Transverse colon (tissue), 4 donors: ENCODE measurements at regions of chr13 and their contacts with region 1.

Region 1: GRCh38 chr13:27270594-27271520 is at the start of gene RASL11A:
- DNase-seq: peak; percentile 90
- H3K4me3 ChIP-seq: peak within 1 kb of the TSS; percentile 64 to 82 (median 66)
- H3K27ac ChIP-seq: peak within 1 kb of the TSS; percentile 91 to 97 (median 94)
- H3K4me1 ChIP-seq: peaks cover 7 to 37% (median 14%) of the 10 kb centered on the region in 4 donors
- H3K27me3 ChIP-seq: no peaks in the 10 kb centered on the region
- CTCF ChIP-seq: peak; percentile 93 to 99 (median 96)
- EP300 ChIP-seq: no peak
- POLR2A ChIP-seq: peak; percentile 95
- total RNA-seq, gene RASL11A: 18.7 to 37.7 (median 28.9) TPM

Region 2: DNA sequence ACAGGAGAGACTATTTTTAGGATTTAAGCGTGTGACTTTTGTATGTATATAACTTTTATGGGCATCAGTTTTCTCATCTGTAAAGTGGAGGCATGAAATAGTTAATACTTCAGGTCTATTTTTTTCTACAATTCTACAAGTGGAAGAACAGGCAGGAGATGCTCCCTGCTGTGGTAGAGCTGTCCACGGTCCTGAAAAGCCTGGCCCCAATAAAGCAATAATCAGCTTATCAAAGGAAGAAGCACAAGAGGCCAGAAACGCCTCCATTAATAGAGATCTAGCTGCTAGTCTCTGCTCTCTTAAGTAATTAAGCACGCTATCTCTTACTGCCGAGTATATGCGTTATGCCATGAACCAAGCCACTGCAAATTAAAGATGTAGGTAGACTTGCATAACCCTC is 741.4 kb before region 1 on chr13:
- in situ Hi-C with region 1: no loop called
- intact Hi-C with region 1: no loop called
- DNase-seq: peak; percentile 20
- H3K4me3 ChIP-seq: no peak overlapping the region
- H3K27ac ChIP-seq: no peak overlapping the region
- H3K4me1 ChIP-seq: no peaks in the 10 kb centered on the region
- H3K27me3 ChIP-seq: peaks cover 12% of the 10 kb centered on the region
- CTCF ChIP-seq: no peak
- EP300 ChIP-seq: no peak
- POLR2A ChIP-seq: no peak

Region 3: GRCh38 chr13:26887594-26887993 is 383.3 kb before region 1 on chr13:
- in situ Hi-C with region 1: no loop called
- intact Hi-C with region 1: no loop called
- DNase-seq: no peak
- H3K4me3 ChIP-seq: no peak overlapping the region
- H3K27ac ChIP-seq: no peak overlapping the region
- H3K4me1 ChIP-seq: no peaks in the 10 kb centered on the region
- H3K27me3 ChIP-seq: no peaks in the 10 kb centered on the region
- CTCF ChIP-seq: no peak
- EP300 ChIP-seq: no peak
- POLR2A ChIP-seq: no peak

Region 4: DNA sequence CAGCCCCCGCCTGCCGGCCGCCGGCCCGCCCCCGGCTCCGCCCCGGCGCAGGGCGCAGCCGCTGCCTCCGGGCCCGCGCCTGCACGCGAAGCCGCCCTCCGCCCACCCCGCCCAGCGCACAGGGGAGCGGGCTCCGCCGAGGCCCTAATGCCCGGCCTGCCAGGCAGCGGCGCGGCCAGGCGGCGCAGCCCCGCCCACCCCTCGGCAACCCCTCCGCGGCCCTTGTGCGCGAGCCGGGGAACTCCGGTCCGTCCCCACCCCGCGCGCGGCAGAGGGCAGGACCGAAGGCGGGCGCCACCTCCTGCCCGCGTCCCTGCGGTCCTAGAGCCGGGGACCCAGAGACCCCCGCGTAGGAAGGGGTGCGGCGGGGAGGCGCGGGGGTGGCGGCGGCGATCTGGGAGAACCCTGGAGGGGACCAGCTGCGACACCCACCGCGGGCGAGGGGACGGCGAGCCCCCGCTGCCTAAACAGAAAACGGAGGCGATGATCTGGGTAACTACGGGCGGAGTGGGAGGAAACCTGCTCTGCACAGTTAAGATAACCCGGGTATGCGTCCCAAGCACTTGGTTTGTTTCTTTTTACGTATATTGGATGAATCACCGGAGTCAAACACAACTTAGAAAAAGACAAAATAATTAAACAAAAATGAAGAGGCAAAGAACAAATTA is 98.9 kb before region 1 on chr13:
- in situ Hi-C with region 1: loop called in 1 of 4 experiments (anchors 25 kb)
- intact Hi-C with region 1: no loop called
- DNase-seq: peak; percentile 96
- H3K4me3 ChIP-seq: peak overlapping the region; percentile 72 to 92 (median 80)
- H3K27ac ChIP-seq: peak overlapping the region; percentile 93 to 97 (median 96)
- H3K4me1 ChIP-seq: peaks cover 22 to 46% (median 32%) of the 10 kb centered on the region in 4 donors
- H3K27me3 ChIP-seq: no peaks in the 10 kb centered on the region
- CTCF ChIP-seq: peak in 1 of 5 experiments; percentile 10
- EP300 ChIP-seq: no peak
- POLR2A ChIP-seq: peak; percentile 26

Region 5: GRCh38 chr13:27341616-27342015 is 70.8 kb after region 1 on chr13:
- in situ Hi-C with region 1: loop called in 1 of 4 experiments (anchors 10 kb)
- intact Hi-C with region 1: loop called (anchors 5 kb)
- DNase-seq: no peak
- H3K4me3 ChIP-seq: no peak overlapping the region
- H3K27ac ChIP-seq: no peak overlapping the region
- H3K4me1 ChIP-seq: no peaks in the 10 kb centered on the region
- H3K27me3 ChIP-seq: peaks cover 5% of the 10 kb centered on the region
- CTCF ChIP-seq: no peak
- EP300 ChIP-seq: no peak
- POLR2A ChIP-seq: no peak

Region 6: DNA sequence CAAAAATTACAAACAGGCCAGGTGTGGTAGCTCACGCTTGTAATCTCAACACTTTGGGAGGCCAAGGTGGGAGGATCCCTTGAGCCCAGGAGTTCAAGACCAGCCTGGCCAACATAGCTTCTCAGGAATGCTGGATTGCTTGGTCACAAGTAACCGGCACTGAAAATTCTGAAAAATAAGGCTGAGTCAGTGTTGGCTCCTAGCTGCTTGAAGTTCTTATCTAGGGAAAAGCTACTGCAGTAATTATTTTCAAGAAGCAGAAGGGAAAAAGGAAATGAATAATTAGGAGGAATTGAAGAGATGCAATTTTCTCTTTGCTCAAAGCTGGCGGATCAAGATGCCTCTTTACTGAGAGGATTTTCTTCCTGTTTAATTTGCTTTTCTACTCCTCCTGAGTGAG is 78.6 kb after region 1 on chr13:
- in situ Hi-C with region 1: loop called in 1 of 4 experiments (anchors 10 kb)
- intact Hi-C with region 1: loop called (anchors 5 kb)
- DNase-seq: no peak
- H3K4me3 ChIP-seq: no peak overlapping the region
- H3K27ac ChIP-seq: no peak overlapping the region
- H3K4me1 ChIP-seq: peaks cover 0 to 14% (median 4%) of the 10 kb centered on the region in 4 donors
- H3K27me3 ChIP-seq: peaks cover 7% of the 10 kb centered on the region
- CTCF ChIP-seq: no peak
- EP300 ChIP-seq: no peak
- POLR2A ChIP-seq: no peak

Region 7: DNA sequence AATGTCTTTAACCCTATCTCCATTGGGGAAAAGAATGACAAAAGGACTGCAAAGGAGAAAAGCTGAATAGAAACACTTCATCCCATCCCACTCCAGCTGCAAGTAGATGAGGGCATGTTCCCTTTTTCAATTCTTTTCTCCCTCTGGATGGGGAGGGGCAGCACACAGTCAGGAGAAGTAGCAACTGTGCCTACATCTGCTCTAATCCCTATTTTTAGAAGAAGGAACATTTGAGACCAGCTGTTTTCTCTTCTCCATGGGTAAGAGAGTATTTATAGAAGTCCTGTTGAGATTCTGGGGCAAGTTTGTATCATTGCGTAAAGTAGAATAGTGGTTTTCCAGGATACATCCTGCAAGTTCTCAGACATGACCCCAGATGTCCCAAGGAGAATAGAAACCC is 144.3 kb after region 1 on chr13:
- in situ Hi-C with region 1: no loop called
- intact Hi-C with region 1: no loop called
- DNase-seq: no peak
- H3K4me3 ChIP-seq: no peak overlapping the region
- H3K27ac ChIP-seq: no peak overlapping the region
- H3K4me1 ChIP-seq: no peaks in the 10 kb centered on the region
- H3K27me3 ChIP-seq: peaks cover 15% of the 10 kb centered on the region
- CTCF ChIP-seq: no peak
- EP300 ChIP-seq: no peak
- POLR2A ChIP-seq: no peak

Region 8: DNA sequence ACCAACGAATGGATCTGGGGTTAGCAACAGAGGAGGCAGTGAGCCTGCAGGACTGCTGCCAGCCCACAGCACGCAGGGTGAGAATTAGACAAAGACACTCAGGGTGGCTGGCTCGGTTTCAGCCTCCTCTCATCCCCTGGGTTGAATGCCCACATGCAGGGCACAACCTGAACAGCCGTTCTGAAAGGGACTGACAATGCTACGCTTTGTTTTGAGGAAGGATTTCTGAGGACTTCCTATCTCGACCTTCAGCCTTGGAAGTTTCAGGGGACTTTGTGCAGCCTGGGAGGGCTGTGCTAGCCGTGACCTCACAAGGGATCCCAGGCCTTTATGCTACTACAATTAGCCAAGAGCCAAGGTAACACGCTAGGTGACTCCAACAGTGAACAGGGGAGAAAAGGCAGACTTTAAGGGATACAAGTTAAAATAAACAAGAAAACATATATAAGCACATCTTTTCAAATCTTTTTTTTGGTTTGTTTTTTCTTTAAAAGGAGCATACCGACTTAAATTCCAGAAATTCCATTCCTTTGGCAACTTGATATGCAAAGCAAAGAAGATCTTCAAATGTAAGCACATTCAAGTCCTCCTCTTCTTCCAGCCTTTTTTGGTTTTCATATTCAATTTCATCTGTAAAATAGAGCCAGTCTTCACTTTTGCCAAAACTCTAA is 752.1 kb after region 1 on chr13:
- in situ Hi-C with region 1: no loop called
- intact Hi-C with region 1: no loop called
- DNase-seq: no peak
- H3K4me3 ChIP-seq: no peak overlapping the region
- H3K27ac ChIP-seq: no peak overlapping the region
- H3K4me1 ChIP-seq: no peaks in the 10 kb centered on the region
- H3K27me3 ChIP-seq: no peaks in the 10 kb centered on the region
- CTCF ChIP-seq: no peak
- EP300 ChIP-seq: no peak
- POLR2A ChIP-seq: no peak